H1 (cell line): ENCODE measurements at regions of chr17 and their contacts with region 1.

Region 1: GRCh38 chr17:75845049-75845860 is 1.1 kb upstream of the UNC13D start:
- DNase-seq: peak; percentile 57 to 87
- H3K4me3 ChIP-seq: no peak overlapping the region
- H3K27ac ChIP-seq: no peak overlapping the region
- H3K4me1 ChIP-seq: peaks cover 0 to 8% (median 6%) of the 10 kb centered on the region in 4 experiments; a peak in 4 of 7 replicates
- H3K27me3 ChIP-seq: no peaks in the 10 kb centered on the region
- CTCF ChIP-seq: peak; percentile 63 to 93 (median 82)
- EP300 ChIP-seq: no peak
- POLR2A ChIP-seq: no peak
- RAD21 ChIP-seq: peak in 1 of 2 experiments; percentile 49; a peak in 2 of 4 replicates

Region 2: GRCh38 chr17:75799398-75799797 is 45.9 kb before region 1 on chr17:
- CTCF ChIA-PET with region 1: interaction called, 16 read pairs
- POLR2A ChIA-PET with region 1: interaction called, 3 read pairs
- DNase-seq: no peak
- H3K4me3 ChIP-seq: no peak overlapping the region
- H3K27ac ChIP-seq: no peak overlapping the region
- H3K4me1 ChIP-seq: no peaks in the 10 kb centered on the region
- H3K27me3 ChIP-seq: no peaks in the 10 kb centered on the region
- CTCF ChIP-seq: no peak
- EP300 ChIP-seq: no peak
- POLR2A ChIP-seq: no peak
- RAD21 ChIP-seq: no peak

Region 3: GRCh38 chr17:75877752-75878173 is 32.5 kb after region 1 on chr17:
- CTCF ChIA-PET with region 1: interaction called, 63 read pairs
- POLR2A ChIA-PET with region 1: interaction called, 5 read pairs
- DNase-seq: peak in 1 of 2 experiments; percentile 87
- H3K4me3 ChIP-seq: peak overlapping the region; percentile 40 to 72 (median 66)
- H3K27ac ChIP-seq: no peak overlapping the region
- H3K4me1 ChIP-seq: peaks cover 0 to 22% (median 12%) of the 10 kb centered on the region in 4 experiments; a peak in 6 of 7 replicates
- H3K27me3 ChIP-seq: peaks cover 10 to 31% (median 24%) of the 10 kb centered on the region in 4 experiments
- CTCF ChIP-seq: peak; percentile 53 to 69 (median 57)
- EP300 ChIP-seq: no peak
- POLR2A ChIP-seq: no peak
- RAD21 ChIP-seq: peak; percentile 10 to 44; a peak in 1 of 4 replicates

Region 4: DNA sequence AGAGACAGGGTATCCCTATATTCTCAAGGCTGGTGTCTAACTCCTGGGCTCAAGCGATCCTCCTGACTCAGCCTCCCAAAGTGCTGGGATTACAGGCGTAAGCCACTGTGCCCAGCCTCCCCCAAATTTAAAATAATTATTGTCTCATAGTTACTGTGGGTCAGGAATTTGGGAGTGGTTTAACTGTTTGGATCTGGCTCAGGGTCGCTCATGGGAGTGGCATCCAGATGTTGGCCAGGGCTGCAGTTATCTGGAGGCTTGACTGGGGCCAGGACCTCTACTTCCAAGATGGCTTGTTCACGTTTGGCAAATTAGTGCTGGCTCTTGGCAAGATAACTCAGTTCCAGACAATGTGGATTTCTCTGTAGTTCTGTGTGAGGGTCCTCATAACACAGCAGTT is 141.8 kb after region 1 on chr17:
- CTCF ChIA-PET with region 1: no interaction called
- POLR2A ChIA-PET with region 1: no interaction called
- DNase-seq: no peak
- H3K4me3 ChIP-seq: no peak overlapping the region
- H3K27ac ChIP-seq: no peak overlapping the region
- H3K4me1 ChIP-seq: peaks cover 7 to 13% (median 10%) of the 10 kb centered on the region in 4 experiments
- H3K27me3 ChIP-seq: no peaks in the 10 kb centered on the region
- CTCF ChIP-seq: no peak
- EP300 ChIP-seq: no peak
- POLR2A ChIP-seq: no peak
- RAD21 ChIP-seq: no peak

Region 5: DNA sequence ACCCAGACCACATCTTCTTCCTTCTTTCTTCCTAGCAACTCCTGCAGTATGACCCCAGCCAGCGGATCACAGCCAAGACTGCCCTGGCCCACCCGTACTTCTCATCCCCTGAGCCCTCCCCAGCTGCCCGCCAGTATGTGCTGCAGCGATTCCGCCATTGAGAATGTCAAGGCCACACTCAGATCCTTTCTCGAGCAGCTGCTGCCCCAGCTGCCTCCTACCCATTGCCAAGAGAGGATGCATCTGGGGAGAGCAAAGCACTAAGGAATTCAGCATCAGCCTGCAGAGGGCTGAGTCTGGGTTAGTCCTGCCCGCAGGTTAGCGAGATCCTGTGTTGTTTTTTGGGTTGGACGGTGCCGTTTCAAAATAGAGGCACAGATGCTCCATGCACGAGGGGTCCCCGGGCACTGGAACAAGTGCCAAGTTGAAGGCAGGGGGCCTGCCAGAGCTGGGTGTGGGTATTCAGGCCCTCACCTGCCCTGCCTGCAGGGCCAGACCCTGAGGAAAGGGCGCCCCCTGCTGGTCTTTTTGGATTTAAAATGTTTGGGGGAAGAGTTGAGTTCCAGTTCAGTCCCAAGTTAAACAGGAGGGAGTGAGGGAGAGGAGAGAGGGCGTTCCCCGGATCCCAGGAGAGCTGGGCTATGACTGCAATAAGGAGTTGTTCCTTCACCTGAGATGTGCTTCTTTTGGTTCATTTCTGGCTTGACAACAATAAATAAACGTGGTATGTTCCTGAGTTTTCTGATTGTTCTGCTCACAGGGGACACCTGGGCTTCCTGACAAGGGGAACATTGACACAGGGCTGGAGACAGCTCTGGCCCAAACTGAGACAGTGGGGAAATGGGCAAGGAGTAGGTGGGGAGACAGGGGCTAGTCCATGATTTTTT is 160.3 kb after region 1 on chr17:
- CTCF ChIA-PET with region 1: interaction called, 12 read pairs
- POLR2A ChIA-PET with region 1: interaction called, 3 read pairs
- DNase-seq: peak in 1 of 2 experiments; percentile 99
- H3K4me3 ChIP-seq: no peak overlapping the region
- H3K27ac ChIP-seq: no peak overlapping the region
- H3K4me1 ChIP-seq: no peaks in the 10 kb centered on the region
- H3K27me3 ChIP-seq: no peaks in the 10 kb centered on the region
- CTCF ChIP-seq: peak; percentile 56 to 92 (median 69)
- EP300 ChIP-seq: no peak
- POLR2A ChIP-seq: no peak
- RAD21 ChIP-seq: peak; percentile 83 to 90